Endothelial cell of umbilical vein (primary cell): ENCODE measurements at regions of chr17 and their contacts with region 1.

Region 1: DNA sequence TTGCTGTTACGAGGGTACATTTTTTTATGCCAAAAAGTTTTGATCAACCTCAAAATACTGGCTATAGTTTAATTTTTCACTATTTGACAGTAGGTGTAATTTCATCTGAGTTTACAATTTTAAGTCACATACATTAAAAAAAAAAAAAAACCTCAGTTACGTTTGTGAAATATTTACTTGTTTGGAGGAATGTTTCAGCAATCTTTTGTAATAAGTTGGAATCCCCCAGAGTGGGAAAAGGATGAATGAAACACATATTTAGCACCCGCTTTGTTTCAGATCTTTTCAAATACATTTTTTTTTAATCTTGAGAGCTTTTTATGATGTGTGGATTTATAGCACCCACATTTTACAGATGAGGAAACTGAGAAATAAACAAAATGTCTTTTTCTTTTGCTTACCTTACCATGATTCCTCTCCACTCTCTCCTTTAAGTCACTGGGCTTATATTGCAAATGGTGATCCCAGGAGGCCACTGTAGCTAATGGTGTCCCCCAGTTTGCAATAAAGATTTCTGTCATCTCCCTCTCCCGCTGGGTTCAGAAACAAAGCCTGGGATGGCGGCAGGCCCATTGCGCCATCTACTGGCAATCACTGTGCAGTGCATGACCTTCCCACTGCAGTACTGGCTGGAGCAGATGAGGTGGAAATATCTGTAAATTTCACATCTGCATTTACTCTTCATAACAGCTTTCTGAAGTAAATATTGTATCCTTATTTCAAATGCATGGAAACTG is 27.7 kb downstream of the TBC1D3B start:
- DNase-seq: peak; percentile 67
- H3K4me3 ChIP-seq: no peak overlapping the region
- H3K27ac ChIP-seq: no peak overlapping the region
- H3K4me1 ChIP-seq: no peaks in the 10 kb centered on the region
- H3K27me3 ChIP-seq: peaks cover 7 to 8% of the 10 kb centered on the region in 2 experiments
- CTCF ChIP-seq: peak; percentile 93 to 99
- POLR2A ChIP-seq: no peak

Region 2: DNA sequence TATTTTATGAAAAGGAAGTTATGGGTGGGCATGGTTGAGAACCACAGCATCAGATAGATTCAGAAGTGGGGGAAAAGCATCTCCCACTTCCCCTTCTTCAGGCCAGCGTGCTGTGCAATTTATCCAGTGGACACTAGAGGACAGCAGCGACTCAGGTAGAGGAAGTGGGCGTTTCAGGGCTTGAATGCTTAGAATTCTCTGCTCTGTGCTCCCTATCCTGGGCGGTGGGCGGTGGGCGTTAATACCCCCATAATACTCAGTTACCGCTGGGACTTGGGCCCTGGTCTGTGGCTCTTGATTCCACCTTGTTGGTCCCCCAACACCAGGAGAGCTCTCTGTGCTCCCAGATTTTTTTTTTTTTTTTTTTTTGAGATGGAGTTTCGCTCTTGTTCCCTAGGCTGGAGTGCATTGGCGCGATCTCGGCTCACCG is 201.6 kb before region 1 on chr17:
- CTCF ChIA-PET with region 1: interaction called, 16 read pairs
- POLR2A ChIA-PET with region 1: no interaction called
- dilution Hi-C with region 1: no loop called
- intact Hi-C with region 1: no loop called
- DNase-seq: peak; percentile 51
- H3K4me3 ChIP-seq: no peak overlapping the region
- H3K27ac ChIP-seq: no peak overlapping the region
- H3K4me1 ChIP-seq: no peaks in the 10 kb centered on the region
- H3K27me3 ChIP-seq: peaks cover 0 to 4% of the 10 kb centered on the region in 2 experiments
- CTCF ChIP-seq: peak; percentile 64 to 82
- POLR2A ChIP-seq: no peak

Region 3: GRCh38 chr17:36027761-36028160 is 121.0 kb before region 1 on chr17:
- CTCF ChIA-PET with region 1: no interaction called
- POLR2A ChIA-PET with region 1: no interaction called
- dilution Hi-C with region 1: no loop called
- intact Hi-C with region 1: no loop called
- DNase-seq: no peak
- H3K4me3 ChIP-seq: no peak overlapping the region
- H3K27ac ChIP-seq: no peak overlapping the region
- H3K4me1 ChIP-seq: no peaks in the 10 kb centered on the region
- H3K27me3 ChIP-seq: peaks cover 6 to 8% of the 10 kb centered on the region in 2 experiments
- CTCF ChIP-seq: no peak
- POLR2A ChIP-seq: no peak

Region 4: GRCh38 chr17:36136036-36136435 is 12.7 kb before region 1 on chr17:
- CTCF ChIA-PET with region 1: interaction called, 17 read pairs
- POLR2A ChIA-PET with region 1: no interaction called
- dilution Hi-C with region 1: no loop called
- intact Hi-C with region 1: no loop called
- DNase-seq: no peak
- H3K4me3 ChIP-seq: no peak overlapping the region
- H3K27ac ChIP-seq: no peak overlapping the region
- H3K4me1 ChIP-seq: no peaks in the 10 kb centered on the region
- H3K27me3 ChIP-seq: peaks cover 0 to 8% of the 10 kb centered on the region in 2 experiments
- CTCF ChIP-seq: no peak
- POLR2A ChIP-seq: no peak